ENCODE measurements at regions of chr18 and their contacts with region 1.

Region 1: GRCh38 chr18:32289483-32290075 is 99.7 kb downstream of the MEP1B start:
- DNase-seq: peak; percentile 36
- H3K4me3 ChIP-seq: no peak overlapping the region
- H3K27ac ChIP-seq: no peak overlapping the region
- H3K27me3 ChIP-seq: no peaks in the 10 kb centered on the region
- CTCF ChIP-seq: peak; percentile 89

Region 2: GRCh38 chr18:32158108-32158624 is 131.4 kb before region 1 on chr18:
- CTCF ChIA-PET with region 1: interaction called, 12 read pairs
- POLR2A ChIA-PET with region 1: no interaction called
- DNase-seq: peak; percentile 72
- H3K4me3 ChIP-seq: no peak overlapping the region
- H3K27ac ChIP-seq: no peak overlapping the region
- H3K27me3 ChIP-seq: peaks cover 9% of the 10 kb centered on the region
- CTCF ChIP-seq: peak; percentile 92

Region 3: DNA sequence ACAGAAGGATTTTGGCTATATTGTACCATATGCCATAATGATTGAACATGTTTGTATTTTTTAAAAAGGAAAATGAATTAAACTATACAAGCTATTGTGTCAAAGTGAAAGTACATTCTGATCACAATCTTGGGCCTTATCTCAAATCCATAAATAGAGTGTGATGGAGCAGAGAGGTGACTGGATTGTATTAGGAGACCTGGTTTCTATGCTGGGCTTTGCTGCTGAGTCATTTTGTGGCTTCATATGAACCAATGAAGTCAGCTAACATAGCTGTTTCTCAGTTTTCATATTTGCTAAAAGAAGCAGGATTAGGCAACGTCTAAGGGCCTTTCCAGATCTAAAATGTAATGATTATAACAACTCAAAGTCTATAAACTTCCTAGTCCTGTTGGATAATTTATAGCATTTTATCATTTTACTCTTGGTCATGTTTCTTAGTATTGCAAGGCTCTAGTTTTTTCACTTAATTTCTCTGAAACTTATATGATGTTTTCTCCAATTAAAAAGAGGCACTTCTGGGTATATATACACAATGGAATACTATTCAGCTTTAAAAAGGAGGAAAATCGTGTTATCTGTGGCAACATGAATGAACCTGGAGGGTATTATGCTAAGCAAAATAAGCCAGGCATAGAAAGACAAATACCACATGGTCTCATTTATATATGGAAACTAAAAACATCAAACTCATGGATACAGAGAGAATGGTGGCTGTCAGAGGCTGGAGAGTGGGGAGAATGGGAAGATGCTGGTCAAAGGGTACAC is 12.6 kb after region 1 on chr18:
- CTCF ChIA-PET with region 1: interaction called, 61 read pairs
- POLR2A ChIA-PET with region 1: no interaction called
- DNase-seq: peak; percentile 58
- H3K4me3 ChIP-seq: no peak overlapping the region
- H3K27ac ChIP-seq: peak overlapping the region; percentile 25
- H3K27me3 ChIP-seq: no peaks in the 10 kb centered on the region
- CTCF ChIP-seq: no peak

Region 4: DNA sequence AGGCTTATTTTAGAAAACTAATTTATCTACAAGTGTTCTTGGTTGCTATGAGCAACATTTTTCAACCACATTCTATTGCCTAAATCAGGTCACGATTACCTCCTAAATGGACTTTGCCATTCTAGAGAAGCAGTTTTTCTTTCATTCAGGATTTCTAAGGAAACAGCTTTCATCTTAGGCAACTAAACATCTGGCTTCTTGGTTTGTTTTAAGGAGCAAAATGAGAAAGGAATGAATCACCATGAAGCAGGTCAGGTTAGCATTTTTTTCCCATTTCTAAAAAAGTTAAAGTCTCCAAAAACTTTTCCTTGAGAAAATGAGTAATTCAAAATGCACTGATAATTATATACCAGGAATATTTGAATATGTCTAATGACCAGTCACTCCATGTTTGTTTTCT is 66.3 kb after region 1 on chr18:
- CTCF ChIA-PET with region 1: interaction called, 15 read pairs
- POLR2A ChIA-PET with region 1: no interaction called
- DNase-seq: peak; percentile 24
- H3K4me3 ChIP-seq: no peak overlapping the region
- H3K27ac ChIP-seq: no peak overlapping the region
- H3K27me3 ChIP-seq: no peaks in the 10 kb centered on the region
- CTCF ChIP-seq: no peak

Region 5: DNA sequence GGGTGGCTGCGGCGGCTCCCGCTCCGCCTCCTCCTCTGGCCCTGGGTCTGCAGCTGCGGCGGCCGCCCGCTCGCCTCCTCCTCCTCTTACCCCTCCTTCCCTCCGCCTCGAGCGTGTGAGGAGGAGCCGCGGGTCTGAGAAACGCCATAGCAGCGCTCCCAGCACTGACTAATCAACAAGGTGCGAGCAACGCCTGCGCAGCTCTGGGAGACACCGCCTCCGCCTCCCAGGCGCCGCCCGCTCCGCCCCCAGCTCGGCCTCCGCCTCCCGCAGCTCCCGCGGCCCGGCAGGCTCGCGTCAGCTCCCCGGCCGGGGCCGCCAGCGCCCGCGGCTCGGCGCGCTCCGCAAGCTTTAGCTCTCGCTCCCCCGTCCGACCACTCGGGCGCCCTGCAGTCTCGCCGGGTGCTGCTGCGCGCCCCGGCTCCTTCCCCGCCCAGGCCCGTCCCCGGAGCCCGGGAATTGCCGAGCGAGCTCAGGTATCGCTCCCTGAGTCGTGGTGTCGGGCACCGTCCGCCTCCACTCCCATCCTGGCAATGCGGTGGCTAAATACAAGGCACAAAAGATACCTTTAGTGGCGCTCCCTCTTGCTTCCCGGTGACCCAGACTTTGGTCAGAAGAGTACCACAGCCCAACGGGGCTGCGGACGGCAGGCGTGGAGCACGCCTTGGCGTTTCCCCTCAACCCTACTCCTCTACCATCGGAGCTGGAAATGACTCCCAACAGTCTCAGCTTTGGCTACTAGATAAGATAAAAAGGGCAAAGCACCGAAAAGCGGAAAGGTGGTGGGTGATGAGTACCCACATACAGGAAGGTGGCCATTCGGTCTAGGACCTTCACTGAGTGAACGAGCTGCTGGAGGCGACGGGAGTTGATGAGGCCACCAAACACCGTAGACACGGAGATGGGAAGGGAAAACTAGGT is 181.4 kb after region 1 on chr18 and contains the start of gene GAREM1:
- CTCF ChIA-PET with region 1: interaction called, 608 read pairs
- POLR2A ChIA-PET with region 1: interaction called, 6 read pairs
- DNase-seq: peak; percentile 96
- H3K4me3 ChIP-seq: peak within 1 kb of the TSS; percentile 68
- H3K27ac ChIP-seq: no peak within 1 kb of the TSS
- H3K27me3 ChIP-seq: peaks cover 4% of the 10 kb centered on the region
- CTCF ChIP-seq: peak; percentile 66
- polyA plus RNA-seq, gene GAREM1: 2.8 and 3.4 TPM in 2 replicates

Region 6: GRCh38 chr18:32494111-32494510 is 204.5 kb after region 1 on chr18:
- CTCF ChIA-PET with region 1: no interaction called
- POLR2A ChIA-PET with region 1: no interaction called
- DNase-seq: no peak
- H3K4me3 ChIP-seq: no peak overlapping the region
- H3K27ac ChIP-seq: no peak overlapping the region
- H3K27me3 ChIP-seq: no peaks in the 10 kb centered on the region
- CTCF ChIP-seq: no peak

Region 7: GRCh38 chr18:32552421-32553030 is 262.9 kb after region 1 on chr18:
- CTCF ChIA-PET with region 1: interaction called, 12 read pairs
- POLR2A ChIA-PET with region 1: no interaction called
- DNase-seq: peak; percentile 41
- H3K4me3 ChIP-seq: no peak overlapping the region
- H3K27ac ChIP-seq: no peak overlapping the region
- H3K27me3 ChIP-seq: peaks cover 3% of the 10 kb centered on the region
- CTCF ChIP-seq: peak; percentile 77

Measured in AG04450 (cell line).